Posterior vena cava (tissue), 2 donors: ENCODE measurements at regions of chr3 and their contacts with region 1.

Region 1: GRCh38 chr3:65828706-65829105 is 210.0 kb downstream of the MAGI1 start:
- DNase-seq: no peak

Region 2: DNA sequence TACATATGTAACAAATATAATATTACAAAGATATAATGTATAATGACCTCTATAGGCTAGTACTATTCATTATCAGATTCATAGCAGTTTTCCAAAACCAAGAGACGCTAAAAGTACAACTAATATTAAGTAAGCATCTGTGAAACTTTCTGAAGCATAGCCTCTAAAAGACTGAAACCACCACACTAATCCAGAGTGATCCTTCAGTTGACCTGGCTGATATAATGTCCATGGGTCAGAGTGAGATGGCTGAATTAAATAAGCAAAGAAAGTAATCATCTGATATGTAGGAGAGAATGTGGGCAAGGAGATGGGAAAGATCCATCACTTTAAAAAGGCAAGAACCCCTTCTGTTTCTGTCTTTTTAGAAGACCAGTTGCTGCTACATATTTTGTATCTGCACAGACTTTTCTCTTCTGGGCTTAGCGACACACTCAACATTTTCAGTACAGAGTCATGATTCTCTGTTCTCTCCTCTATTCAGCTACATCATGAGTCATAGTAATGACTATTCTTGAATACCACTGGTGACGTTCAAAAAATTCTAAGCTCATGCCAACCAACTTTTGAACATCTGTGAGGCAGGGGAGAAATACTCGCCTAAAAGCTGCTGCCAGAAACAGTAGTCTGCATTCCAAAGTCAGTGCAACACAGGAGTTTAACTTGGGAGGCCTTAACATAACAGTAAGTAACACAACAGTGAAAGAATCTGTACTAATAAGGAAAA is 60.4 kb after region 1 on chr3:
- intact Hi-C with region 1: no loop called
- DNase-seq: no peak

Region 3: GRCh38 chr3:66442254-66443117 is 613.8 kb after region 1 on chr3:
- intact Hi-C with region 1: loop called in 1 of 2 experiments (anchors 10 kb)
- DNase-seq: no peak